ENCODE measurements at regions of chr12 and their contacts with region 1.

Region 1: DNA sequence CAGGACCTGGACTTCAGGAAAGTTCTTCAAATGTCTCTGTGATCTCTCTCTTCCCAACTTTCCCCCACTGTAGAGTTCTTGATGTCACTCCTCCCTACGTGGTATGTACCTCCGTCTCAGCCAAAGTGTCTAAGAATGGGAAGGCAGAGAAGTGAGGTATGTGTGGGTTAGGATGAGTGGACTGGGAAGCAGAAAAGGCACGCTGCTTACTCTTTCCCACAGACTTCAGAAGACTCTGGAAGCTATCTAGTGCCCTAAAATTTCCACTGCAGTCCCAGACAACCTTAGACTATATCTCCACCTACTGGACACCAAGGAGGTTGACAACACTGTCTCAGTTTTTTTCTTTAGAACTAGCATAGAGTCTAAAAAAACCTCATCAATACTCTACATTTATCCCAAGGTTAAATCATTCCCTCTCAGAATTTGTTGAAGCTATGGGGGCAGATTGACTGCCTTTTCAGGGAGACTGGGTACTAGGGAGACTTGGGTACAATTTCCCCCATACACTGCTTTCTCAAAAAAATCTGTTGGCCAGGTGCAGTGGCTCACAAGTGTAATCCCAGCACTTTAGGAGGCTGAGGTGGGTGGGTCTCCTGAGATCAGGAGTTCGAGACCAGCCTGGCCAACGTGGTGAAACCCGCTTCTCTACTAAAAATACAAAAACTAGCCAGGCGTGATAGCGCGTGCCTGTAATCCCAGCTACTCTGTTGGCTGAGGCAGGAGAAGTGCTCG is 20.6 kb upstream of the ITGA5 start:
- DNase-seq: peak in 3 of 35 experiments; percentile 24 to 75 (median 27)
- ATAC-seq: peak; percentile 81 to 87 (median 83)
- H3K4me3 ChIP-seq: no peak overlapping the region
- H3K4me3 Mint-ChIP-seq: no peak overlapping the region
- H3K27ac ChIP-seq: no peak overlapping the region
- H3K27ac Mint-ChIP-seq: peak overlapping the region in 1 of 2 donors; percentile 47
- H3K4me1 ChIP-seq: peaks cover 0 to 3% of the 10 kb centered on the region in 2 experiments
- H3K4me1 Mint-ChIP-seq: peaks cover 3 to 12% (median 4%) of the 10 kb centered on the region in 3 donors
- H3K27me3 ChIP-seq: peaks cover 0 to 3% of the 10 kb centered on the region in 2 experiments
- H3K27me3 Mint-ChIP-seq: peaks cover 0 to 1% of the 10 kb centered on the region in 2 donors

Region 2: DNA sequence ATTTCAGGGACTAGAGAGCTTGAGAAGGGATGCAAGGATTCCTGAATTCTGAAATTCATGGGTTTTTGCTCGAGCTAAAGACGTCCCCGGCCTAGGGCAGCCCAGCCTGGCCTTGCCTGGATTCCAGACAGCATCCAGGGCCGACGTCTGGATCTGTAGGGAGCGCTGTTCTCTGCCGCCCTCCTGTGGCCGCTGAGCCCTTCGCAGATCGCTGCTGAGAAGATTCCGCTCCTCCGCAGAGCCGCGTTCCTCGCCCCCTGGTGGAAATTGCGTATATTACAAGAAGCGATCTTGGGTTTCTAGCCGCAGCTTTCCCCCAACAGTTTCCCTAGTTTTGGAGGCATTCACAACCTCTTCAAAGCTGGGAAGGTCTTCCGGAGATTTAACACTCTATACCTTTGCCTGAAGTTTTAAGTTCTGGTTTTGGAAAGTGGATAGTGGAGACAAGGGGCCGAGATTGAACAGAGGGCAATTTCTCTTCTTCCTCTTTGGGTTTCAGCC is 693.0 kb before region 1 on chr12:
- CTCF ChIA-PET with region 1: no interaction called
- POLR2A ChIA-PET with region 1: no interaction called
- DNase-seq: peak; percentile 64 to 95 (median 82)
- ATAC-seq: peak; percentile 74 to 87 (median 80)
- H3K4me3 ChIP-seq: no peak overlapping the region
- H3K4me3 Mint-ChIP-seq: no peak overlapping the region
- H3K27ac ChIP-seq: no peak overlapping the region
- H3K27ac Mint-ChIP-seq: no peak overlapping the region
- H3K4me1 ChIP-seq: peaks cover 7 to 41% of the 10 kb centered on the region in 2 experiments
- H3K4me1 Mint-ChIP-seq: peaks cover 14 to 25% (median 19%) of the 10 kb centered on the region in 3 donors
- H3K27me3 ChIP-seq: peaks cover 14 to 78% of the 10 kb centered on the region in 2 experiments
- H3K27me3 Mint-ChIP-seq: peaks cover 21 to 46% of the 10 kb centered on the region in 2 donors

Region 3: GRCh38 chr12:54359033-54359761 is 80.5 kb before region 1 on chr12:
- CTCF ChIA-PET with region 1: no interaction called
- POLR2A ChIA-PET with region 1: no interaction called
- DNase-seq: peak; percentile 77 to 98 (median 94)
- ATAC-seq: peak; percentile 95 to 96 (median 95)
- H3K4me3 ChIP-seq: peak overlapping the region; percentile 83 to 84
- H3K4me3 Mint-ChIP-seq: no peak overlapping the region
- H3K27ac ChIP-seq: peak overlapping the region; percentile 77
- H3K27ac Mint-ChIP-seq: no peak overlapping the region
- H3K4me1 ChIP-seq: peaks cover 16 to 30% of the 10 kb centered on the region in 2 experiments
- H3K4me1 Mint-ChIP-seq: peaks cover 10 to 21% (median 14%) of the 10 kb centered on the region in 3 donors
- H3K27me3 ChIP-seq: peaks cover 0 to 3% of the 10 kb centered on the region in 2 experiments
- H3K27me3 Mint-ChIP-seq: no peaks in the 10 kb centered on the region

Region 4: GRCh38 chr12:54404061-54405004 is 35.4 kb before region 1 on chr12:
- CTCF ChIA-PET with region 1: interaction called, 89 to 174 read pairs
- POLR2A ChIA-PET with region 1: interaction called, 5 to 10 read pairs
- DNase-seq: peak in 28 of 35 experiments; percentile 28 to 85 (median 56)
- ATAC-seq: peak; percentile 32 to 70 (median 50)
- H3K4me3 ChIP-seq: no peak overlapping the region
- H3K4me3 Mint-ChIP-seq: no peak overlapping the region
- H3K27ac ChIP-seq: peak overlapping the region; percentile 50
- H3K27ac Mint-ChIP-seq: peak overlapping the region; percentile 89 to 91
- H3K4me1 ChIP-seq: peaks cover 0 to 34% of the 10 kb centered on the region in 2 experiments
- H3K4me1 Mint-ChIP-seq: peaks cover 37 to 44% (median 44%) of the 10 kb centered on the region in 3 donors
- H3K27me3 ChIP-seq: no peaks in the 10 kb centered on the region
- H3K27me3 Mint-ChIP-seq: no peaks in the 10 kb centered on the region

Region 5: DNA sequence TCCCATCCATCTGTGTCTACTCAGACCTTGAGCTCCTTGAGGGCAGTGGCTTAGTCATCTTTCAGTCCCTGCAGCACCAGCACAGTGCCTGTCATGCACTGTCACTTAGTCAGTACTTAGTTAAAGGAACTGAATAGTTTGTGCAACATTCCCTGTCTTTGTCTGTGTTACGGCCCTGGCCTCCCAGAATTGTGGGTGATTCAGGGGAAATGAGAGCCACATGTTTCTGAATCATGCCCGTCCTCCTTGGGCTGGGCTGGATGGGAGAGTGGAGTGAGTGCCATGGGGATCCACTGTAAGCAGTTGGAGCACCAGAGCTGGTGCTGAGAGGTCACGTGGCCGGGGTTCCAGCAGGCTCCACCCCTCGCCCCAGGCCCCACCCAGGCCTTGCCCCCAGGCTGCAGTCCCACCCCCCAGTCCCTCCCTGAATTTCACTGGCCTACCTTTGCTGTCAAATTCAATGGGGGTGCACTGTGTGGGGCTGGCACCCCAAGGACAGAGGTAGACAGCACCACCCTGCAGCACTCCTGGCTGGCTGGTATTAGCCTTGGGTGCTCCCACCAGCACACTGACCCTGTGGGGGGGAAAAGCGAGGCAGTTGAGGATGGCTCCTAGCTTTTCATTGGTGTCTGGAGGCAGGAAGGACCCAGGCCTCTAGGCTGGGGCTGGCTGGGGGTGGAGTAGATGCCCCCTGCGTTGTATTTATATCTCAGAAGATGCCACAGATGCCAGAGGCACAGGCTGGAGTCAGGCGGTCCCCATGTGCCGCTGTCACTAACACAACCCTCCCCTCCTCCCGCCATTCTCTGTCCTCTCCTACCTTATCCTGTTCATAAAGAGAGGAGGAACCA is 28.1 kb before region 1 on chr12:
- CTCF ChIA-PET with region 1: interaction called, 8 to 14 read pairs
- POLR2A ChIA-PET with region 1: interaction called in 1 of 2 experiments, 4 read pairs
- DNase-seq: peak in 31 of 35 experiments; percentile 27 to 70 (median 52)
- ATAC-seq: peak; percentile 19 to 45 (median 42)
- H3K4me3 ChIP-seq: peak overlapping the region; percentile 47 to 79
- H3K4me3 Mint-ChIP-seq: peak overlapping the region; percentile 75 to 81 (median 76)
- H3K27ac ChIP-seq: peak overlapping the region; percentile 97
- H3K27ac Mint-ChIP-seq: peak overlapping the region; percentile 96 to 97
- H3K4me1 ChIP-seq: peaks cover 39 to 81% of the 10 kb centered on the region in 2 experiments
- H3K4me1 Mint-ChIP-seq: peaks cover 77 to 82% (median 82%) of the 10 kb centered on the region in 3 donors
- H3K27me3 ChIP-seq: no peaks in the 10 kb centered on the region
- H3K27me3 Mint-ChIP-seq: no peaks in the 10 kb centered on the region

Region 6: DNA sequence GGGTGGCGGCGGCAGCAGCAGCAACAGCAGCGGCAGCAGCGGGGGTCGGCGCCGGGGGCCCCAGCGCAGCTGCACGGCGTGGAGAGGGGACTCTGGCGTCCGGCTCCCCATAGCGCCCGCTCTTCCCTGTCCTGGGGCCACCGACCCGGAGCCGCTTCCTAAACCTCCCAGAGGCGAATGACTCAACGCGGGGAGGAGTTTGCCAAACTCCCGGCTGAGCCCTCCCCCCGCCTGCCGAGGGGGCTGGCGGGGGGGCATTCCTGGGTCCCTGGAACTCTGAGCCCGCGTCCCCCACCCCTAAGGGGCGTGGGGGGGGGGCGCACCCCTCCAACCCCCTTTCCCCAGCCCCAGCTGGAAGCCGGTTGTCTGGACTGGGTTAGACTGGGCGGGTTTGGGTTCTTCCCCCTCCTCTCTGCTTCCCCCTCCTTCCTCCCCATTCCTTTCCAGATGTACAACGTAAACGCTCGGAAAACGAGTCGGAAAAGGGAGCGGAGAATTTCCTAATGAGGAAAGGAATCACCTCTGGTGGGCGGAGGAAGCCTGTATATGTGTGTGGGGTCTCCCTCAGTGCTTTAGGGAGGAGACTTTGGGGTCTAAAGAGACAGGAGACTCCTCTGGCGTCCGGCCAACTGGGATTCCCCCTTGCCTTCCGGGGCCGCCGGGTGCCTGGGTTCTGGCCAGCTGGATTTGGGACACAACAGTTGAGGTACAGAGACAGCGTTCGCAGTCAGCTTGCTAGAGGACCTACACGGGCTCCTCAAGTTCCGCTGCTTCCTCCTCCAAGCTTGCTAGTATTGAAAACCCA is 20.4 kb before region 1 on chr12 and contains the start of gene ITGA5:
- CTCF ChIA-PET with region 1: interaction called, 8 to 11 read pairs
- POLR2A ChIA-PET with region 1: interaction called in 1 of 2 experiments, 4 read pairs
- DNase-seq: peak in 7 of 35 experiments; percentile 20 to 65 (median 44)
- ATAC-seq: peak; percentile 20 to 51 (median 37)
- H3K4me3 ChIP-seq: peak within 1 kb of the TSS; percentile 83 to 94
- H3K4me3 Mint-ChIP-seq: peak within 1 kb of the TSS; percentile 81 to 97 (median 95)
- H3K27ac ChIP-seq: peak within 1 kb of the TSS; percentile 91
- H3K27ac Mint-ChIP-seq: peak within 1 kb of the TSS; percentile 97 to 98
- H3K4me1 ChIP-seq: peaks cover 29 to 61% of the 10 kb centered on the region in 2 experiments
- H3K4me1 Mint-ChIP-seq: peaks cover 53 to 69% (median 64%) of the 10 kb centered on the region in 3 donors
- H3K27me3 ChIP-seq: peaks cover 0 to 14% of the 10 kb centered on the region in 2 experiments
- H3K27me3 Mint-ChIP-seq: no peaks in the 10 kb centered on the region
- total RNA-seq, gene ITGA5: 58.6 to 183 (median 169) TPM